MCF 10A (cell line): ENCODE measurements at regions of chr11 and their contacts with region 1.

Region 1: GRCh38 chr11:73177778-73178577 is 35.9 kb upstream of the FCHSD2 start:
- DNase-seq: peak; percentile 88
- H3K4me3 Mint-ChIP-seq: no peak overlapping the region
- H3K27ac Mint-ChIP-seq: no peak overlapping the region
- H3K4me1 Mint-ChIP-seq: no peaks in the 10 kb centered on the region
- H3K27me3 Mint-ChIP-seq: no peaks in the 10 kb centered on the region
- CTCF ChIP-seq: peak; percentile 79

Region 2: GRCh38 chr11:72722050-72722748 is 455.8 kb before region 1 on chr11:
- CTCF ChIA-PET with region 1: interaction called, 46 read pairs
- POLR2A ChIA-PET with region 1: interaction called, 3 read pairs
- intact Hi-C with region 1: loop called (anchors 1 kb)
- DNase-seq: peak; percentile 90
- H3K4me3 Mint-ChIP-seq: peak overlapping the region; percentile 81
- H3K27ac Mint-ChIP-seq: peak overlapping the region; percentile 89
- H3K4me1 Mint-ChIP-seq: peaks cover 21% of the 10 kb centered on the region
- H3K27me3 Mint-ChIP-seq: no peaks in the 10 kb centered on the region
- CTCF ChIP-seq: no peak

Region 3: GRCh38 chr11:72840780-72841179 is 337.2 kb before region 1 on chr11:
- CTCF ChIA-PET with region 1: interaction called, 14 read pairs
- POLR2A ChIA-PET with region 1: no interaction called
- intact Hi-C with region 1: loop called (anchors 5 kb)
- DNase-seq: peak; percentile 86
- H3K4me3 Mint-ChIP-seq: no peak overlapping the region
- H3K27ac Mint-ChIP-seq: no peak overlapping the region
- H3K4me1 Mint-ChIP-seq: peaks cover 23% of the 10 kb centered on the region
- H3K27me3 Mint-ChIP-seq: no peaks in the 10 kb centered on the region
- CTCF ChIP-seq: no peak

Region 4: DNA sequence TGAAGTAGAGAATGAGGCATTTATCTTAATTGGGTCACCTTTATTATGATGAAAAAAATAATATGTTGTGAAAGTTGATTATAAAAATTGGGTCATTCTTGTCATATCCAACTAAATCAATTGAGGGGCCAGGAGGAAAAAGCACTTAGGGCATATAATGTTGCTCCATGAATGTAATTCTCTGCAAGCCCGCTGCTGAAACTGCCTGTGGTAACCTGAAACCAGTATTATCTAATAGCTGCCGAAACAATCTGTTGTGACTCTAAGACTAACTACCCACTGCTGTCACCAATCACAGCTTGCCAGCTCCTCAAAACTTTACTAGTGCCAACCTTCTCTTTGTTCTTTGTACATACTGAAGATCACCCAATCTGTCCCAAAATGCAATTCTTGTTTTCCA is 248.0 kb before region 1 on chr11:
- CTCF ChIA-PET with region 1: interaction called, 70 read pairs
- POLR2A ChIA-PET with region 1: interaction called, 8 read pairs
- intact Hi-C with region 1: no loop called
- DNase-seq: peak; percentile 33
- H3K4me3 Mint-ChIP-seq: no peak overlapping the region
- H3K27ac Mint-ChIP-seq: no peak overlapping the region
- H3K4me1 Mint-ChIP-seq: no peaks in the 10 kb centered on the region
- H3K27me3 Mint-ChIP-seq: no peaks in the 10 kb centered on the region
- CTCF ChIP-seq: no peak

Region 5: GRCh38 chr11:73053964-73054363 is 124.0 kb before region 1 on chr11:
- CTCF ChIA-PET with region 1: no interaction called
- POLR2A ChIA-PET with region 1: no interaction called
- intact Hi-C with region 1: no loop called
- DNase-seq: no peak
- H3K4me3 Mint-ChIP-seq: no peak overlapping the region
- H3K27ac Mint-ChIP-seq: no peak overlapping the region
- H3K4me1 Mint-ChIP-seq: no peaks in the 10 kb centered on the region
- H3K27me3 Mint-ChIP-seq: no peaks in the 10 kb centered on the region
- CTCF ChIP-seq: no peak

Region 6: DNA sequence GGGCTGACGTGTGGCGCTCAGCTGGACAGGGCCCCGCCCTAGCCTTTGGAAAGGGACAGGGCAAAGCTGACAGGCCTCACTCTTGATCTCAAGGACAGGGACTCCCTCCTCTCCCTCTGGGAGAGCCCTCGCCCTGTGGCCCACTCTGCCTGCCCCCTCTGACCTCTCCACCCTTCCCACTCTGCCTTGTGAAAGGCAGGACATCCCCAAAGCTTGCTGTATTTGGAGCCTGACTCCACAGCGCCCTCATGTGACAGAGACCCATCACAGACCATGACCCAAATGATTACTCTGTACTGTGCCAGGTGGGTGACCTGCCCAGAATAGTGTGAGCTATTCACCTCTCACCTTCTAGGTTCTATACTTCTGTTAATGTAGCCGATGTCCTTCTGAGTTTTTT is 58.9 kb after region 1 on chr11:
- CTCF ChIA-PET with region 1: interaction called, 238 read pairs
- POLR2A ChIA-PET with region 1: interaction called, 3 read pairs
- intact Hi-C with region 1: no loop called
- DNase-seq: peak; percentile 75
- H3K4me3 Mint-ChIP-seq: no peak overlapping the region
- H3K27ac Mint-ChIP-seq: no peak overlapping the region
- H3K4me1 Mint-ChIP-seq: no peaks in the 10 kb centered on the region
- H3K27me3 Mint-ChIP-seq: no peaks in the 10 kb centered on the region
- CTCF ChIP-seq: peak; percentile 62

Region 7: GRCh38 chr11:73288873-73289707 is 111.1 kb after region 1 on chr11:
- CTCF ChIA-PET with region 1: interaction called, 12 read pairs
- POLR2A ChIA-PET with region 1: interaction called, 3 read pairs
- intact Hi-C with region 1: no loop called
- DNase-seq: peak; percentile 72
- H3K4me3 Mint-ChIP-seq: no peak overlapping the region
- H3K27ac Mint-ChIP-seq: no peak overlapping the region
- H3K4me1 Mint-ChIP-seq: peaks cover 6% of the 10 kb centered on the region
- H3K27me3 Mint-ChIP-seq: no peaks in the 10 kb centered on the region
- CTCF ChIP-seq: peak; percentile 97